ENCODE measurements at regions of chr13 and their contacts with region 1.

Region 1: DNA sequence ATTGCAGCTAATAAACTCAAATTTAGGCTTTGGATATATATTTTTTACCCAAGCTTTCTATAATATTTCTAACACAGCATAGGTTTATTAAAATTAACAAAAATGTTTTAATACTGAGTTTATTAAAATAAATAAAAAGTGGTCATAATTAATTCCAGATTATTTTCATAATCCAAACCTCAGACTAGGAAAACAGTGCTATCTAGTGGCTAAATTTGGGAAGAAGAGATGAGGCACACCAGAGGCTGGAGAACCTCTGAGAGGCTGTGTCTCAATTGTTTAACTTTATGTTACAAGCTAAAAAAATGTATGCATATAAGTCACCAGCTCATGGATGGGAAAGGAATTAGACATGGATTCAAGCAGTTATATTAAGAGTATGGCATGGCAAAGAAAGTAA is 392.5 kb downstream of the DIAPH3 start:
- DNase-seq: no peak
- H3K4me3 ChIP-seq: no peak overlapping the region
- H3K27ac ChIP-seq: no peak overlapping the region
- H3K27me3 ChIP-seq: no peaks in the 10 kb centered on the region
- CTCF ChIP-seq: peak; percentile 81

Region 2: GRCh38 chr13:59391696-59392095 is 379.6 kb before region 1 on chr13:
- CTCF ChIA-PET with region 1: interaction called, 57 read pairs
- POLR2A ChIA-PET with region 1: no interaction called
- DNase-seq: peak; percentile 51
- H3K4me3 ChIP-seq: no peak overlapping the region
- H3K27ac ChIP-seq: no peak overlapping the region
- H3K27me3 ChIP-seq: no peaks in the 10 kb centered on the region
- CTCF ChIP-seq: peak; percentile 98

Region 3: GRCh38 chr13:59700281-59700680 is 71.0 kb before region 1 on chr13:
- CTCF ChIA-PET with region 1: interaction called, 10 read pairs
- POLR2A ChIA-PET with region 1: no interaction called
- DNase-seq: no peak
- H3K4me3 ChIP-seq: no peak overlapping the region
- H3K27ac ChIP-seq: no peak overlapping the region
- H3K27me3 ChIP-seq: no peaks in the 10 kb centered on the region
- CTCF ChIP-seq: no peak

Region 4: GRCh38 chr13:59734393-59734792 is 36.9 kb before region 1 on chr13:
- CTCF ChIA-PET with region 1: interaction called, 11 read pairs
- POLR2A ChIA-PET with region 1: no interaction called
- DNase-seq: no peak
- H3K4me3 ChIP-seq: no peak overlapping the region
- H3K27ac ChIP-seq: no peak overlapping the region
- H3K27me3 ChIP-seq: no peaks in the 10 kb centered on the region
- CTCF ChIP-seq: no peak

Region 5: GRCh38 chr13:59750860-59751259 is 20.4 kb before region 1 on chr13:
- CTCF ChIA-PET with region 1: interaction called, 57 read pairs
- POLR2A ChIA-PET with region 1: no interaction called
- DNase-seq: peak; percentile 13
- H3K4me3 ChIP-seq: peak overlapping the region; percentile 18; the same call in 1 of the 2 replicates
- H3K27ac ChIP-seq: no peak overlapping the region
- H3K27me3 ChIP-seq: no peaks in the 10 kb centered on the region
- CTCF ChIP-seq: 0 out of 2 replicates have a peak, but pooled peaks have one; percentile 3

Region 6: GRCh38 chr13:59906413-59907049 is 135.3 kb after region 1 on chr13:
- CTCF ChIA-PET with region 1: interaction called, 30 read pairs
- POLR2A ChIA-PET with region 1: no interaction called
- DNase-seq: peak; percentile 8
- H3K4me3 ChIP-seq: no peak overlapping the region
- H3K27ac ChIP-seq: no peak overlapping the region
- H3K27me3 ChIP-seq: no peaks in the 10 kb centered on the region
- CTCF ChIP-seq: peak; percentile 75